Lower leg skin (tissue), 4 donors: ENCODE measurements at regions of chr10 and their contacts with region 1.

Region 1: GRCh38 chr10:123548770-123549169 is 117.4 kb upstream of the GPR26 start:
- DNase-seq: peak in 1 of 2 donors; percentile 39
- H3K4me3 ChIP-seq: no peak overlapping the region
- CTCF ChIP-seq: no peak
- POLR2A ChIP-seq: no peak

Region 2: GRCh38 chr10:122990278-122990677 is 558.5 kb before region 1 on chr10:
- intact Hi-C with region 1: no loop called
- DNase-seq: no peak
- H3K4me3 ChIP-seq: no peak overlapping the region
- CTCF ChIP-seq: no peak
- POLR2A ChIP-seq: no peak

Region 3: GRCh38 chr10:123398180-123398591 is 150.6 kb before region 1 on chr10:
- intact Hi-C with region 1: loop called (anchors 10 kb)
- DNase-seq: no peak
- H3K4me3 ChIP-seq: no peak overlapping the region
- CTCF ChIP-seq: no peak
- POLR2A ChIP-seq: no peak

Region 4: DNA sequence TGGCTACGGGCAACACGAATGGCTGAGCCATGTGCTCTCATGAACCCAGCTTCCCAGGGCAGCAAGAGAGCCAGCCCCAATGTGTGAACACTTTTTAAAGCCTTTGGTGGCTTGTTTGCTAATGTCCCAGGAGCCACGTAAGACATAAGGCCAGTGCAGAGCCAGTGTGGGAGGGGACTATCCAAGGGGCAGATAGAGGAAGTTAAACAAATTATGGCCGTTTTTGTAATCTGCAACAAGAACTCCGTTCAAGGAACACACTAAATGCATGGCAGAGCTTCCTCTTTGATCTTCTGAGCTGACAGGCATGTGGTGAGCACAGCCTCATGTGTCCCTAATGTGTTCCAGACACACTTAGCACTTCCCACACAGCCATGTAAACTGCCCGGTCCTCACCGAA is 2000.9 kb after region 1 on chr10:
- intact Hi-C with region 1: loop called (anchors 5 kb)
- DNase-seq: no peak
- H3K4me3 ChIP-seq: no peak overlapping the region
- CTCF ChIP-seq: no peak
- POLR2A ChIP-seq: no peak